Panc1 (cell line): ENCODE measurements at regions of chr2 and their contacts with region 1.

Region 1: DNA sequence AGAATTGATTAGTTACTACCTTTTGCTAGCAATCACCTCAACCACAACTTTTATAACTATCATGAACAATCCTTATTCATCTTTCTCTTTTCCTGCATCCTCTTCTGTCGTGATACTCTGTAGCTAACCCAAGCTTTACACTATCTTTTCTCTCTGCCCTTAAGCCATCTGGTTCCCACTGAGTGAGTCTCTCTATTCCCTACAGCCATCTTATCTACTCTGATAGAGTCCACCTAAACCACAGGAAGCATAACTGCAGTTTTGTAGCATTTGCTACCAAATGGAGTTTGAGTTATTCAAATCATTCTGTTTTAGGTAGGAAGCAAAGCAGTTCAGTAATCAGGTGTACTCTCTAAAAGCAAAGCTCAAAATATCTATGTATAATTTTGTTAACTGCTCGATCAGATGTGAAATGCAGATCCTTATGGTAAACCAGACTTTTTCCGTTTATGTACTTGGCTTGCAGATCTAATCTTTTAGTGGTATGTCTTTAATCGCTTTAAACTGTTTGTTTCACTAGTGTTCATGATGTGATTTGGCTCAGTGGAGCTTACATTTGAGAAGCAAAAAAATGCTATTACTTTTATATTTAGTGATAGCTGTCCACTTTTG is 91.0 kb downstream of the CSRNP3 start:
- DNase-seq: no peak
- ATAC-seq: no peak
- H3K4me3 ChIP-seq: no peak overlapping the region
- H3K27ac ChIP-seq: no peak overlapping the region
- H3K4me1 ChIP-seq: no peaks in the 10 kb centered on the region
- H3K27me3 ChIP-seq: no peaks in the 10 kb centered on the region
- CTCF ChIP-seq: no peak

Region 2: GRCh38 chr2:165536851-165537499 is 23.5 kb before region 1 on chr2:
- CTCF ChIA-PET with region 1: no interaction called
- POLR2A ChIA-PET with region 1: no interaction called
- in situ Hi-C with region 1: no loop called
- intact Hi-C with region 1: loop called (anchors 1 kb)
- DNase-seq: no peak
- ATAC-seq: no peak
- H3K4me3 ChIP-seq: no peak overlapping the region
- H3K27ac ChIP-seq: no peak overlapping the region
- H3K4me1 ChIP-seq: no peaks in the 10 kb centered on the region
- H3K27me3 ChIP-seq: no peaks in the 10 kb centered on the region
- CTCF ChIP-seq: no peak

Region 3: GRCh38 chr2:166180951-166181812 is 620.7 kb after region 1 on chr2:
- CTCF ChIA-PET with region 1: no interaction called
- POLR2A ChIA-PET with region 1: no interaction called
- in situ Hi-C with region 1: no loop called
- intact Hi-C with region 1: no loop called
- DNase-seq: peak; percentile 15
- ATAC-seq: peak; percentile 82
- H3K4me3 ChIP-seq: no peak overlapping the region
- H3K27ac ChIP-seq: no peak overlapping the region
- H3K4me1 ChIP-seq: no peaks in the 10 kb centered on the region
- H3K27me3 ChIP-seq: no peaks in the 10 kb centered on the region
- CTCF ChIP-seq: peak; percentile 82